Naive thymus-derived CD4-positive, alpha-beta T cell (primary cell): ENCODE measurements at regions of chr4 and their contacts with region 1.

Region 1: GRCh38 chr4:77777135-77777807 is 41.9 kb downstream of the CNOT6L start:
- DNase-seq: no peak
- ATAC-seq: peak; percentile 29
- H3K4me3 ChIP-seq: no peak overlapping the region
- H3K4me3 Mint-ChIP-seq: peak overlapping the region in 5 of 10 donors; percentile 4 to 57 (median 23)
- H3K27ac ChIP-seq: no peak overlapping the region
- H3K27ac Mint-ChIP-seq: peak overlapping the region in 7 of 9 donors; percentile 35 to 80 (median 78)
- H3K4me1 ChIP-seq: peaks cover 7 to 12% of the 10 kb centered on the region in 2 donors
- H3K4me1 Mint-ChIP-seq: peaks cover 32 to 74% (median 66%) of the 10 kb centered on the region in 7 donors
- H3K27me3 ChIP-seq: no peaks in the 10 kb centered on the region
- H3K27me3 Mint-ChIP-seq: no peaks in the 10 kb centered on the region

Region 2: GRCh38 chr4:77872723-77873445 is 95.6 kb after region 1 on chr4:
- CTCF ChIA-PET with region 1: no interaction called
- POLR2A ChIA-PET with region 1: no interaction called
- intact Hi-C with region 1: loop called in 1 of 2 experiments (anchors 5 kb)
- DNase-seq: no peak
- ATAC-seq: no peak
- H3K4me3 ChIP-seq: no peak overlapping the region
- H3K4me3 Mint-ChIP-seq: no peak overlapping the region
- H3K27ac ChIP-seq: no peak overlapping the region
- H3K27ac Mint-ChIP-seq: no peak overlapping the region
- H3K4me1 ChIP-seq: peaks cover 0 to 5% of the 10 kb centered on the region in 2 donors
- H3K4me1 Mint-ChIP-seq: peaks cover 15 to 31% (median 26%) of the 10 kb centered on the region in 7 donors
- H3K27me3 ChIP-seq: no peaks in the 10 kb centered on the region
- H3K27me3 Mint-ChIP-seq: no peaks in the 10 kb centered on the region

Region 3: GRCh38 chr4:78014889-78015885 is 237.9 kb after region 1 on chr4:
- CTCF ChIA-PET with region 1: no interaction called
- POLR2A ChIA-PET with region 1: no interaction called
- intact Hi-C with region 1: no loop called
- DNase-seq: no peak
- ATAC-seq: no peak
- H3K4me3 ChIP-seq: no peak overlapping the region
- H3K4me3 Mint-ChIP-seq: no peak overlapping the region
- H3K27ac ChIP-seq: no peak overlapping the region
- H3K27ac Mint-ChIP-seq: no peak overlapping the region
- H3K4me1 ChIP-seq: no peaks in the 10 kb centered on the region
- H3K4me1 Mint-ChIP-seq: no peaks in the 10 kb centered on the region
- H3K27me3 ChIP-seq: no peaks in the 10 kb centered on the region
- H3K27me3 Mint-ChIP-seq: peaks cover 0 to 25% (median 15%) of the 10 kb centered on the region in 5 donors

Region 4: GRCh38 chr4:78379991-78380729 is 602.9 kb after region 1 on chr4:
- CTCF ChIA-PET with region 1: no interaction called
- POLR2A ChIA-PET with region 1: no interaction called
- intact Hi-C with region 1: no loop called
- DNase-seq: no peak
- ATAC-seq: no peak
- H3K4me3 ChIP-seq: no peak overlapping the region
- H3K4me3 Mint-ChIP-seq: no peak overlapping the region
- H3K27ac ChIP-seq: no peak overlapping the region
- H3K27ac Mint-ChIP-seq: peak overlapping the region in 1 of 9 donors; percentile 68
- H3K4me1 ChIP-seq: no peaks in the 10 kb centered on the region
- H3K4me1 Mint-ChIP-seq: peaks cover 0 to 1% (median 0%) of the 10 kb centered on the region in 7 donors
- H3K27me3 ChIP-seq: no peaks in the 10 kb centered on the region
- H3K27me3 Mint-ChIP-seq: peaks cover 0 to 14% (median 6%) of the 10 kb centered on the region in 5 donors